GM12878 (cell line): ENCODE measurements at regions of chr3 and their contacts with region 1.

Region 1: DNA sequence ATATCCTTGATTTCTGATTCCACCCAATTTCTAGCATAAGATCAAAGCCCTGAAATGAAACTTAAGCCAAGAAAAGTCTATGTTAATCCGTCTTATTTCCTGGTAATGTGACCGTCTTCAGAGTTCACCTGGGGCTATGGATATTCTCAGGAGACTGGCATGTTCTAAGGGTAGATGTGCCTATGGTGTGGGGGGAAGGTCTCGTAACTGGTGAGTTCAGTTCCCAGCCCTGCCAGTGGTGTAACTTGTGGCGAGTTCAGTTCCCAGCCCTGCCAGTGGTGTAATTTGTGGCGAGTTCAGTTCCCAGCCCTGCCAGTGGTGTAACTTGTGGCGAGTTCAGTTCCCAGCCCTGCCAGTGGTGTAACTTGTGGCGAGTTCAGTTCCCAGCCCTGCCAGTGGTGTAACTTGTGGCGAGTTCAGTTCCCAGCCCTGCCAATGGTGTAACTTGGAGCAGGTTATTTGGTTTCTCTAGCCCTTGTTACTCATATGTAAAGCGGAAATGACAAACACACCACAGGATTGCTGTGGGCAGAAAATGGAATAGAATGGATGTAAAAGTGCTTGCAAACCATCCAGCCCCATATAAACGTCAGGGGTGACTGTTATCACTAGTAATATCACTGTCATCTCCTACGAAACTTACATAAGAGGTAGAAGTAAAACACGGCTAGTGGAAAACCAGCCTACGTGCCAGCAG is 30.4 kb downstream of the SLC51A start:
- DNase-seq: no peak
- ATAC-seq: no peak
- H3K4me3 ChIP-seq: no peak overlapping the region
- H3K27ac ChIP-seq: no peak overlapping the region
- H3K4me1 ChIP-seq: no peaks in the 10 kb centered on the region
- H3K27me3 ChIP-seq: no peaks in the 10 kb centered on the region
- CTCF ChIP-seq: no peak
- EP300 ChIP-seq: no peak
- POLR2A ChIP-seq: no peak
- RAD21 ChIP-seq: no peak

Region 2: DNA sequence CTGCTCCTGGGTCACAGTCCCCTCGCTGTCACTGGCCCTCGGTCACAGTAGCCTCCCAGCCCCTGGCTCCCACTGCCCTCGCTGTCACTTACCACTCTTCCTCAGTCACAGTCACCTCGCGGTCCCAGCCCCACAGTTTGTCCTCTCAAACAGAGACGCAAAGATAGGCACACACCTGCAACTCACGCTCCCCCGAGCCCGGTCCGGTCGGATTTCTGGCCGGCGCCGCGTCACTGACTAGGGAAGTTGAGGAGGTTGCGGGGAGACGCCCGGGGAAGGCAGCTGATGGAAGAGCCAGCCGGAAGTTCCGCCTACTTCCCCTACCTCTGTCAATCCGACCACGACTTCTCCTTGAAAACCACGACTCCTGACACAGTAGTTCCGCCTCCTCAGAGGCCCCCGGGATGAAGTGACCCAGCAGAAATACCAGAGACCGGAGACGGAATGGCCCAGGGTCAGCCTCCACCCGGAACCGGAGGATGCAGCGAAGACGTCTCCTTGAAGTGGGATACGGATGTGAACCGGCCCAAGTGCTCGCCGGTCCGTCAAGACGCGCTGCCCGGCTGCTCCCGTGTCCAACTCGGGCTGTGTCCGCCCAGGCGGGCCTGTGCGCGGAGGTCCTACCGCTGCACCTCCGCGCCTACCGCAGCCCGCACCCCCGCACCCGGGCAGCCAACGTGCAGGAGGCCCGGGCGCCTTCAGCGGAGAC is 40.8 kb after region 1 on chr3 and contains the start of gene PCYT1A:
- CTCF ChIA-PET with region 1: no interaction called
- POLR2A ChIA-PET with region 1: interaction called, 11 read pairs
- RAD21 ChIA-PET with region 1: no interaction called
- SMC1A ChIA-PET with region 1: no interaction called
- in situ Hi-C with region 1: no loop called
- intact Hi-C with region 1: no loop called
- DNase-seq: peak; percentile 66
- ATAC-seq: peak; percentile 84
- H3K4me3 ChIP-seq: peak within 1 kb of the TSS; percentile 79
- H3K27ac ChIP-seq: peak within 1 kb of the TSS; percentile 94
- H3K4me1 ChIP-seq: peaks cover 7% of the 10 kb centered on the region
- H3K27me3 ChIP-seq: no peaks in the 10 kb centered on the region
- CTCF ChIP-seq: no peak
- EP300 ChIP-seq: peak in 1 of 2 experiments; percentile 38; a peak in 1 of 4 replicates
- POLR2A ChIP-seq: peak; percentile 90
- RAD21 ChIP-seq: no peak
- polyA plus RNA-seq, gene PCYT1A: 10.8 to 15.3 TPM